ENCODE measurements at regions of chr12 and their contacts with region 1.

Region 1: DNA sequence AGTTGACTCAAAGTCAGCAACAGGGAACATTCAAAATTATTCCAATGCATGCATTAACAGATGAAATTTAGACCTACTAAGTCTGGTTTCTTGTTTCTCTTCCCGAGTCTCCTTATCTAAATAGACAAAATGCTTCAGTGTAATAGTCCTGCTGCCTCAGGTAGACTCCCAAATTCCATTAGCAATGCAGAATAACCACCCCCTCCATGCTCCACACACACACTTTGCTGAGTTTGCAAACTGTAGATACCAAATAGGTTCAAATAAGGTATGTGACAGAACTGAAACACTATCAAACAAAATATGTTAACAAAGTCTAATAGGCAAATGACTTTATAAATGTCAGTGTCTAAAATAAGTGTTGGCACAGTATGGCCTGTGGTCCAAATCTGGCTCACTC is 451.1 kb upstream of the SOX5 start:
- DNase-seq: no peak
- ATAC-seq: no peak
- H3K4me3 ChIP-seq: no peak overlapping the region
- H3K27ac ChIP-seq: no peak overlapping the region
- H3K4me1 ChIP-seq: peaks cover 7% of the 10 kb centered on the region
- H3K27me3 ChIP-seq: no peaks in the 10 kb centered on the region
- CTCF ChIP-seq: no peak
- POLR2A ChIP-seq: no peak
- RAD21 ChIP-seq: no peak

Region 2: DNA sequence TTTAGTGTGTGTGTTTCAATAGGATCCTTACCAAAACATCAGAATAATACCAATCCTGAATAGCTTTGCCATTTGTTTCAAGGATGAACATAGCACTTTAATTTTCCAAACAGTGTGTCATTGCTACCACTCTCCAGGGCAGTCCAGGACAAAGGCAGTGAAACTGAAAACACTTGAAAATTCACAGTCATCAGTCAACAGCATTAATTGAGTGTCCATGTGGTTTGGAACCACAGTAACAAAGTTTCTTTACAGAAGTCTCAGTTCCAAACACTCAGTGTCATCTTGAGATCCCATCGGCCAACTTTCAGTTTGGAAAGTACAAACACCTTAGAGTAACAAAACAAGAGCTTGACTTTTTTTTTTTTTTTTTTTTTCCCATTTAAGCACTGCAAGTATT is 222.6 kb before region 1 on chr12:
- CTCF ChIA-PET with region 1: no interaction called
- POLR2A ChIA-PET with region 1: no interaction called
- dilution Hi-C with region 1: no loop called
- in situ Hi-C with region 1: no loop called
- intact Hi-C with region 1: no loop called
- DNase-seq: no peak
- ATAC-seq: no peak
- H3K4me3 ChIP-seq: no peak overlapping the region
- H3K27ac ChIP-seq: no peak overlapping the region
- H3K4me1 ChIP-seq: no peaks in the 10 kb centered on the region
- H3K27me3 ChIP-seq: no peaks in the 10 kb centered on the region
- CTCF ChIP-seq: no peak
- POLR2A ChIP-seq: no peak
- RAD21 ChIP-seq: no peak

Region 3: GRCh38 chr12:24244801-24245200 is 155.7 kb before region 1 on chr12:
- CTCF ChIA-PET with region 1: no interaction called
- POLR2A ChIA-PET with region 1: no interaction called
- dilution Hi-C with region 1: no loop called
- in situ Hi-C with region 1: no loop called
- intact Hi-C with region 1: no loop called
- DNase-seq: no peak
- ATAC-seq: no peak
- H3K4me3 ChIP-seq: no peak overlapping the region
- H3K27ac ChIP-seq: no peak overlapping the region
- H3K4me1 ChIP-seq: no peaks in the 10 kb centered on the region
- H3K27me3 ChIP-seq: no peaks in the 10 kb centered on the region
- CTCF ChIP-seq: no peak
- POLR2A ChIP-seq: no peak
- RAD21 ChIP-seq: no peak

Region 4: GRCh38 chr12:24386836-24387235 is 13.7 kb before region 1 on chr12:
- CTCF ChIA-PET with region 1: interaction called, 6 read pairs
- POLR2A ChIA-PET with region 1: no interaction called
- dilution Hi-C with region 1: no loop called
- in situ Hi-C with region 1: no loop called
- intact Hi-C with region 1: loop called (anchors 2 kb)
- DNase-seq: no peak
- ATAC-seq: no peak
- H3K4me3 ChIP-seq: no peak overlapping the region
- H3K27ac ChIP-seq: no peak overlapping the region
- H3K4me1 ChIP-seq: peaks cover 2% of the 10 kb centered on the region; the same call in 1 of the 2 replicates
- H3K27me3 ChIP-seq: no peaks in the 10 kb centered on the region
- CTCF ChIP-seq: no peak
- POLR2A ChIP-seq: no peak
- RAD21 ChIP-seq: no peak

Region 5: GRCh38 chr12:24537083-24537860 is 136.7 kb after region 1 on chr12:
- CTCF ChIA-PET with region 1: no interaction called
- POLR2A ChIA-PET with region 1: no interaction called
- dilution Hi-C with region 1: no loop called
- in situ Hi-C with region 1: no loop called
- intact Hi-C with region 1: no loop called
- DNase-seq: no peak
- ATAC-seq: no peak
- H3K4me3 ChIP-seq: no peak overlapping the region
- H3K27ac ChIP-seq: peak overlapping the region; percentile 40; the same call in 1 of the 2 replicates
- H3K4me1 ChIP-seq: peaks cover 18% of the 10 kb centered on the region
- H3K27me3 ChIP-seq: no peaks in the 10 kb centered on the region
- CTCF ChIP-seq: no peak
- POLR2A ChIP-seq: no peak
- RAD21 ChIP-seq: no peak

Measured in IMR-90 (cell line).